Activated CD8-positive, alpha-beta memory T cell treated with anti-CD3 and anti-CD28 coated beads, Interleukin-2, amount 10 ng/mL, durations not matched to agents 7 days and 5 days (primary cell): ENCODE measurements at regions of chr15 and their contacts with region 1.

Region 1: GRCh38 chr15:40906091-40906990 is 12.1 kb downstream of the VPS18 start:
- DNase-seq: peak; percentile 82
- ATAC-seq: peak; percentile 87
- H3K4me3 Mint-ChIP-seq: peak overlapping the region; percentile 64
- H3K27ac Mint-ChIP-seq: peak overlapping the region; percentile 41
- H3K4me1 Mint-ChIP-seq: peaks cover 28% of the 10 kb centered on the region
- H3K27me3 Mint-ChIP-seq: no peaks in the 10 kb centered on the region

Region 2: GRCh38 chr15:40847205-40847961 is 59.0 kb before region 1 on chr15:
- CTCF ChIA-PET with region 1: no interaction called
- DNase-seq: no peak
- ATAC-seq: no peak
- H3K4me3 Mint-ChIP-seq: no peak overlapping the region
- H3K27ac Mint-ChIP-seq: no peak overlapping the region
- H3K4me1 Mint-ChIP-seq: peaks cover 25% of the 10 kb centered on the region
- H3K27me3 Mint-ChIP-seq: peaks cover 16% of the 10 kb centered on the region

Region 3: GRCh38 chr15:40893733-40894688 is 12.3 kb before region 1 on chr15 and contains the start of gene VPS18:
- CTCF ChIA-PET with region 1: interaction called, 102 read pairs
- DNase-seq: peak; percentile 99
- ATAC-seq: peak; percentile 98
- H3K4me3 Mint-ChIP-seq: peak within 1 kb of the TSS; percentile 98
- H3K27ac Mint-ChIP-seq: peak within 1 kb of the TSS; percentile 94
- H3K4me1 Mint-ChIP-seq: peaks cover 32% of the 10 kb centered on the region
- H3K27me3 Mint-ChIP-seq: no peaks in the 10 kb centered on the region
- total RNA-seq, gene VPS18: 16.9 to 19.5 TPM

Region 4: DNA sequence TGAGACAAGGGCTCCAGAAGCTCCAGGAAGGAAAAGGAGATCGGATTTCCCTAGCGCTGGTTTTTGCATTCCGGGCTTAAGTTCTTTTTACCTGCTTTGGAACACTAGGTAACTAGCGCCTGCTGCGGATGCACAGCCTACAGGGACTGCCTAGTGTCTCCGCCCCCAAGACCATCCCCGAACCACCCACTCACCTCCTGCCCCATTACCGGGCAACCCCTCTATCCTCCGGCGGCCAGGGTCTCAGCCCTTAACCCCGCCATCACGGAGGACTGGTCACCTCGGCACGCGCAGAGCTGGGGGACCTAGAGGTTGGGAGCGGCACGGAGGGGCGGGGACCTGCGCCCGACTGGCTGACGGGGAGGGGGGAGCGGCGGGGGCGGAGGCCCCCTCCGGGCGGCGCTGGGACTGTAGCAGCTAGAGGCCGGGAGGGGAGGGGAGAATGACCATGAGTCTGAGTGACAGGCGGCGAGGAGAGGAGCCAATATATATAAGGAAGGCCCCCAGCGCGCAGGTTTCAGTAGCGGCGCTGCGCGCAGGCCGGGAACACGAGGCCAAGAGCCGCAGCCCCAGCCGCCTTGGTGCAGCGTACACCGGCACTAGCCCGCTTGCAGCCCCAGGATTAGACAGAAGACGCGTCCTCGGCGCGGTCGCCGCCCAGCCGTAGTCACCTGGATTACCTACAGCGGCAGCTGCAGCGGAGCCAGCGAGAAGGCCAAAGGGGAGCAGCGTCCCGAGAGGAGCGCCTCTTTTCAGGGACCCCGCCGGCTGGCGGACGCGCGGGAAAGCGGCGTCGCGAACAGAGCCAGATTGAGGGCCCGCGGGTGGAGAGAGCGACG is 22.7 kb after region 1 on chr15 and contains the start of gene DLL4:
- CTCF ChIA-PET with region 1: interaction called, 17 read pairs
- DNase-seq: peak; percentile 54
- ATAC-seq: peak; percentile 42
- H3K4me3 Mint-ChIP-seq: peak within 1 kb of the TSS; percentile 47
- H3K27ac Mint-ChIP-seq: peak within 1 kb of the TSS; percentile 19
- H3K4me1 Mint-ChIP-seq: peaks cover 48% of the 10 kb centered on the region
- H3K27me3 Mint-ChIP-seq: peaks cover 77% of the 10 kb centered on the region
- total RNA-seq, gene DLL4: 0.12 TPM in 1 of 2 experiments, not detected in the other

Region 5: DNA sequence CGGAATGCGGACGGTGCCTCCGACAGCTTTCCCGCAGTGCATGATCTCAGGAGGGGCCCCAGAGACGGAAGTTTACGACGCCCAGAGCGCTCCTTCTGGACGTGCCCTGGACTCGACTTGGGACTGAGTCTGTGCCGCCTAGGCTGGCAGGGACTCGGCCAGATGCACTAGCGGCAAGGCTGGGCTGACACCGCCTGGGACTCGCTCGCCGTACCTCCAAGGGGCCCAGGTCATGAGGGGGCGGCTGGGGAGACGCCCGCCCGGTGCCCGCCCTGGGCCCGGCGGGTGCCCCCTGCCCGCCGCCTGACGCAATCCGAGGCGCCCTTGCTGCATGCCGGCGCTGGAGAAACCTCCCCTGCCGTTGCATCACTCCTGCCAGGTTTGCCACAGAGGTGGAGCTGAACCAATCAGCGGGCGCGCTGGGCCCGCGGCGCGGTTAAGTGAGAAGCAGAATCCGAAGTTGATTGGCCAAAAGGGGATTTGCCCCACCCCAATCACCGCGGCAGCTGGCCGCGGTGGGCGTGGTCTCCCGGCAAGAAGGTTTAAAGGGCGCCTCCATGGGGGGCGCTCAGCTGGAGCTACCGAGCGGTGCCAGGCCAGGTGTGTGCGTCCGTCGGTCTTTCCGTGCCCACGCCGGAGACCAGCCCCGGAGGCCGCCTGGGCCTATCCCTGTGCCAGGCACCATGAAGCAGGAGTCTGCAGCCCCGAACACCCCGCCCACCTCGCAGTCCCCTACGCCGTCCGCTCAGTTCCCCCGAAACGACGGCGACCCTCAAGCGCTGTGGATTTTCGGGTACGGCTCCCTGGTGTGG is 46.8 kb after region 1 on chr15 and contains the start of gene CHAC1:
- CTCF ChIA-PET with region 1: interaction called, 10 read pairs
- DNase-seq: peak; percentile 98
- ATAC-seq: peak; percentile 93
- H3K4me3 Mint-ChIP-seq: peak within 1 kb of the TSS; percentile 83
- H3K27ac Mint-ChIP-seq: peak within 1 kb of the TSS; percentile 88
- H3K4me1 Mint-ChIP-seq: peaks cover 29% of the 10 kb centered on the region
- H3K27me3 Mint-ChIP-seq: no peaks in the 10 kb centered on the region
- total RNA-seq, gene CHAC1: 8.3 to 13.0 TPM

Region 6: DNA sequence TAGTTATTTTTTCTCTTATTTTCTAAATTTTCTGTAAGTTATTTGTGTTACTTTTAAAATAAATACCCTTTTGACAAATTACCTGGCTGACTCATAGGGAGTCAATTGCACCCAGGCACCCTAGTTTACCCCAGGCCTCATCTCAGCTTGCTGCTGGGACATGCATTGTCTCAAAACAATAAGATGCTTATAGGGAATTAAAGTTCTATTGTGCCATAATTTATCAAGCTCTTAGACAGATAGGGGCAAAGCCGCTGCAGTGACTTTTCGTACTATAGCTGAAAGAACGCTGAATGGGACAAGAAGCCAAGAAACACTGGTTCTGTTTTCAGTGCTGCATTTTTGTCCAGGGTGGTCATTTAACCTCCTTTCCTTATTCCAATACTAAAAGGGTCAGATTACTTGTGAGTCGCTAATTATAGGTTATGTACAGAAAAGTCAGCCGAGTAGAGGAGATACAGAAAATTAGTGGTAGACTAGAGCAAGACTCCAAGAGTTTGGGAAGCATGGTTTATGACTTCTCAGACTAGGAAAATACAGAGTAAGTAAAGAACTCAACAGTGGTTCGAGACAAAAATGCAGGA is 274.0 kb after region 1 on chr15:
- CTCF ChIA-PET with region 1: interaction called, 81 read pairs
- DNase-seq: no peak
- ATAC-seq: no peak
- H3K4me3 Mint-ChIP-seq: no peak overlapping the region
- H3K27ac Mint-ChIP-seq: no peak overlapping the region
- H3K4me1 Mint-ChIP-seq: peaks cover 1% of the 10 kb centered on the region
- H3K27me3 Mint-ChIP-seq: peaks cover 13% of the 10 kb centered on the region